BJ (cell line): ENCODE measurements at regions of chr3 and their contacts with region 1.

Region 1: DNA sequence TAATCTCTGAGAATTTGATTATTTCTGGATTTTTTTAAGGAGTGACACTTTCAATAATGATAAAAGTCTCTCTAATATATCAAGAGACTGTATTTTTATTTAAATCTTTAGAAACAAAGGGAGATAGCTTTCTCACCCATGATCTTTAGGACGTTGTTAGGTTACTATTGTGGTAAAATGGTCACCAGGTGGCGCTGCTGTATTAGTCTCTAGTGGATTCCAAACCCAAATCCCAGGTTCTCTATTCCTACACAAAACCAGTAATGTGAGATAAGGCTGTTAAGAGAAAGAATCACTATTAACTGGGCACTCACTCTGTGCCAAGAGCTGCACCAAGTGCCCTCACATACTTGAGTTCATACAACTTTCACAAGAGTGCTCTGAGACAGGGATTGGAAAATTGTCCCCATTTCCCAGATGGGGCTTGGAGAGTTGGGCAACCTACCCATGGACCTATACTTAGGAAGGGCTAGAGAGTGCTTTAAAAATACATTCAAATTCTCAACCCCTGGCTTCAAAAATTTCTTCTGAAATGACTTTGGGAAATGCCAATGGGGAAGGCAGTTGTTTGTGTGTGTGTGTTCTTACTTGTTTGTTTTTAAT is 593.4 kb upstream of the TGFBR2 start:
- DNase-seq: no peak
- H3K4me3 ChIP-seq: no peak overlapping the region
- H3K27me3 ChIP-seq: no peaks in the 10 kb centered on the region
- CTCF ChIP-seq: peak; percentile 61

Region 2: GRCh38 chr3:30024466-30024865 is 11.4 kb after region 1 on chr3:
- CTCF ChIA-PET with region 1: interaction called, 17 read pairs
- POLR2A ChIA-PET with region 1: no interaction called
- DNase-seq: no peak
- H3K4me3 ChIP-seq: no peak overlapping the region
- H3K27me3 ChIP-seq: no peaks in the 10 kb centered on the region
- CTCF ChIP-seq: no peak

Region 3: GRCh38 chr3:30035935-30036567 is 23.0 kb after region 1 on chr3:
- CTCF ChIA-PET with region 1: no interaction called
- POLR2A ChIA-PET with region 1: no interaction called
- DNase-seq: no peak
- H3K4me3 ChIP-seq: no peak overlapping the region
- H3K27me3 ChIP-seq: no peaks in the 10 kb centered on the region
- CTCF ChIP-seq: no peak